PC-9 (cell line): ENCODE measurements at regions of chr1 and their contacts with region 1.

Region 1: DNA sequence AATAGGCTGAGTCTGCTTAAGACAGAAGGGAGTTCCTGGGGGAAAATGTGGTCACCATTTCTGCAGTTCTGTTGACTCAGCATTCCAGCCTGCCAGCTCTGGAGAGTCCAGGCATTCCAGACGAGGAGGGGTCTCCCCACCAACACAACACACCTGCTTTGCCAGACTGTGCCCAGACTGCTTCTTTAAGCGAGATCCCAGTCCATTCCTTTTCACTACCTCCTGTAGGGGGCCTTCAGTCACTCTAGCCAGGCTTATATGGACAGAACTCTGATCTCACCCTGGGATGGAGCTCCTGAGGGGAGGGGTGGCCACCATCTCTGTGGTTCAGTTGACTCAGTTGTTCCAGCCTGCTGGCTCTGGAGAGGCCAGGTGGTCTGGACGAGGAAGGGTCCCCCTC is 48.5 kb downstream of the UBE2U start:
- DNase-seq: no peak
- H3K4me3 ChIP-seq: no peak overlapping the region
- H3K27ac ChIP-seq: no peak overlapping the region
- H3K4me1 ChIP-seq: no peaks in the 10 kb centered on the region
- H3K27me3 ChIP-seq: no peaks in the 10 kb centered on the region
- CTCF ChIP-seq: 0 out of 2 replicates have a peak, but pooled peaks have one; percentile 22

Region 2: DNA sequence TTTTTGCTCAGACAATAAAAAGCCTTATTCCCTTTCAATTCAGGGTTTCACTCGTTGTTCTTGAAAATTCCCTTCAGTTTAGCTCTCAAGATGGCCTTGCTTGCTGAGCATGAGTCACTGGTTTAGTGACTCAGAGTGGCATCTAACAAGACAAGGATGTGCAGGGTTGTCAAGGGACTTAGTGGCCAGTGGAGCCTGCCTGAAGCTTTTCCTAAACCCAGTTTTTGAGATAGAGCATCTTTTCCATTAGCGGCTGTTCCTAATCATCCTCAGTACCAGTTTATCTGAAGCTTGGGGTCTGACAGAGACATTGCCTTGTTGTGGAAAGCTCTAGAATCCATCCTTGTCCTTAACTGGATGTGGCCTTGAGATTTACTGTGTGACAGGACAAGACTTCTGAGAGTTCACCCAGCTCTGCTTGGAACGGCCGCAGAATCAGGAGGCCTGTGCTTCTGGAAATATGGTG is 1009.0 kb after region 1 on chr1:
- CTCF ChIA-PET with region 1: no interaction called
- POLR2A ChIA-PET with region 1: interaction called, 16 read pairs
- intact Hi-C with region 1: no loop called
- DNase-seq: peak; percentile 28 to 64
- H3K4me3 ChIP-seq: no peak overlapping the region
- H3K27ac ChIP-seq: no peak overlapping the region
- H3K4me1 ChIP-seq: peaks cover 13% of the 10 kb centered on the region; the same call in 1 of the 2 replicates
- H3K27me3 ChIP-seq: no peaks in the 10 kb centered on the region
- CTCF ChIP-seq: no peak